Common myeloid progenitor, CD34-positive (primary cell): ENCODE measurements at regions of chr4 and their contacts with region 1.

Region 1: GRCh38 chr4:10013722-10014121 is 7.6 kb downstream of the SLC2A9 start:
- DNase-seq: peak; percentile 40 to 62 (median 59)
- H3K4me3 ChIP-seq: no peak overlapping the region
- H3K27ac ChIP-seq: no peak overlapping the region
- H3K4me1 ChIP-seq: peaks cover 0 to 16% (median 6%) of the 10 kb centered on the region in 4 experiments
- H3K27me3 ChIP-seq: no peaks in the 10 kb centered on the region

Region 2: GRCh38 chr4:9704551-9705332 is 309.0 kb before region 1 on chr4:
- CTCF ChIA-PET with region 1: interaction called, 12 read pairs
- POLR2A ChIA-PET with region 1: no interaction called
- DNase-seq: peak in 2 of 3 donors; percentile 9 to 19
- H3K4me3 ChIP-seq: no peak overlapping the region
- H3K27ac ChIP-seq: no peak overlapping the region
- H3K4me1 ChIP-seq: peaks cover 0 to 4% (median 3%) of the 10 kb centered on the region in 4 experiments
- H3K27me3 ChIP-seq: no peaks in the 10 kb centered on the region

Region 3: DNA sequence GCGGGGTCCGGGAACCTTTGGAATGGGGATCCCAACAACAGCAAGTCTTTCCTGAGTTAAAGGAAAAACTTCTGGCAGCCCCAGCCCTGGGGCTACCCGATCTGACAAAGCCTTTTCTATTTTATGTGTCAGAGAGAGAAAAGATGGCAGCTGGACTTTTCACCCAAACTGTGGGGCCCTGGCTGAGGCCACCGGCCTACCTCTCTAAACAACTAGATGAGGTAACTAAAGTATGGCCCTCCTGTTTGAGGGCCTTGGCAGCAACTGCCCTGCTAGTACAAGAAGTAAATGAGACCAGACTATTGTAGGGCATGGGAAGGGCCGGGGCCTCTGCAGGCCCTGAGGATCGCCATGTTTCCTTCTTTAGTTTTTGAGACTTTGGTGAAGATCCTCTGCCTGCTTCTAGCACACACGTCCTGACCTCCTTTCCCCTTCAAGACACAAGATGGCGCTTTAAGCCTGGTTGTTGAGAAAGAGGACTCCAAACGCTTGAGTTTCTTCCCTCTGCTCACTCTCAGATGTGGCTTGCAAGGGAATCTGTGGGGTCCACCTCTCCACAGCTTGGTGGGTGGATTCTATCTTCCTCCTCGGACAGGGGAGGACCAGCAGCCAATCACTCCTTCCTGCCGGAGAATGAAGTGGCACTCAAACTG is 250.8 kb before region 1 on chr4:
- CTCF ChIA-PET with region 1: interaction called, 82 read pairs
- POLR2A ChIA-PET with region 1: interaction called, 3 read pairs
- DNase-seq: peak; percentile 67 to 87 (median 86)
- H3K4me3 ChIP-seq: no peak overlapping the region
- H3K27ac ChIP-seq: no peak overlapping the region
- H3K4me1 ChIP-seq: no peaks in the 10 kb centered on the region
- H3K27me3 ChIP-seq: peaks cover 0 to 15% (median 0%) of the 10 kb centered on the region in 5 experiments

Region 4: GRCh38 chr4:10063544-10064300 is 50.0 kb after region 1 on chr4:
- CTCF ChIA-PET with region 1: interaction called, 32 read pairs
- POLR2A ChIA-PET with region 1: no interaction called
- DNase-seq: peak; percentile 65 to 76 (median 72)
- H3K4me3 ChIP-seq: no peak overlapping the region
- H3K27ac ChIP-seq: no peak overlapping the region
- H3K4me1 ChIP-seq: peaks cover 0 to 6% (median 2%) of the 10 kb centered on the region in 4 experiments
- H3K27me3 ChIP-seq: no peaks in the 10 kb centered on the region